Heart left ventricle (tissue), 16 donors: ENCODE measurements at regions of chr6 and their contacts with region 1.

Region 1: DNA sequence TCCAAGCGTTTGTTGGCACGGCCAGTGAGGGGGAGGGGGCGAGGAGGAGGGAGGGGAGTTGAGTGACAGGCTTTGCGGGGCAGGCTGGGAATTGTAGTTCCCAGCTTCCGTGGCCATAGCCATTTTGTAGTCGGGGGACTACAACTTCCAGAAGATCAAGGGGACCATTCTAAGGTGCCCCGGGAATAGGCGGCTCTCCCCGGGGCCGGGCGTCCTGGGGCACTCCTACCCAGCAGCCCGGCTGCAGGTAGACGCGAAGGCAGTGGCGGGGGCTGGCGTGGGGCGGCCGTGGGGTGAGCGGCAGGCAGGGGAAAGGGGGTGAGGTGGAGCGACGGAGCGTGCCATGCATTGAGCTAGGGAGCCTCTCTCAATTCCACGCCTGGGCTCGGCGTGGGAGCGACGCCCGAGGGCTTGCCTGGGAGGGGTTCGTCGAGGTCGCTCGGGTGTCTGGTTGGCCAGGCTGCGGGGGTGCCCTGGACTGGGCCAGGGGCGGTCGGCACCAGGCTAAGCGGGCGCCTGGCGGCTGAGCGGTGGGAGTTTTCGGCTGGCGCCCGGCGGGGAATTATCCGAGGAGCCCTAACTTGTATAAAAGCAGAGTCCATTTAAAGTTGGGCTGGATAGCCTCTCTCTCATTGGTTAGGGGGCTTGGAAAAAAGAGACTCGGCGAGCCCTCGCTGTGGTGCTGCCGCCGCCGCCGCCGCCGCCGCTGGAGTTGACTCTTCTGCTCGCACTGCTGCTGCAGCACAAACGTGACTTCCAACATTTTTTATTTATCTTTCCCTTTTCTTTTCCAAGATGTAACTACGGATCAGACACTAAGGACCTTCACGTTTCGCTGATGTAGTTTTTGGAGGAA is at the start of gene JARID2:
- DNase-seq: peak; percentile 99 to 100 (median 99)
- ATAC-seq: peak; percentile 81 to 91 (median 90)
- H3K4me3 ChIP-seq: peak within 1 kb of the TSS; percentile 54 to 92 (median 82)
- H3K27ac ChIP-seq: peak within 1 kb of the TSS; percentile 76 to 98 (median 95)
- H3K4me1 ChIP-seq: peaks cover 0 to 38% (median 12%) of the 10 kb centered on the region in 12 donors
- H3K27me3 ChIP-seq: no peaks in the 10 kb centered on the region
- CTCF ChIP-seq: no peak
- POLR2A ChIP-seq: peak; percentile 74 to 95
- total RNA-seq, gene JARID2: 6.0 to 12.2 (median 8.5) TPM

Region 2: GRCh38 chr6:14431385-14432330 is 813.9 kb before region 1 on chr6:
- intact Hi-C with region 1: loop called in 1 of 10 experiments (anchors 10 kb)
- DNase-seq: peak in 2 of 5 donors; percentile 49 to 60
- ATAC-seq: peak; percentile 92 to 96 (median 93)
- H3K4me3 ChIP-seq: peak overlapping the region; percentile 2 to 59 (median 40)
- H3K27ac ChIP-seq: peak overlapping the region in 11 of 12 donors; percentile 30 to 80 (median 50)
- H3K4me1 ChIP-seq: peaks cover 0 to 21% (median 0%) of the 10 kb centered on the region in 12 donors
- H3K27me3 ChIP-seq: no peaks in the 10 kb centered on the region
- CTCF ChIP-seq: no peak
- POLR2A ChIP-seq: no peak

Region 3: GRCh38 chr6:14799928-14800327 is 445.7 kb before region 1 on chr6:
- intact Hi-C with region 1: loop called in 1 of 10 experiments (anchors 10 kb)
- DNase-seq: peak in 4 of 5 donors; percentile 75 to 83 (median 78)
- ATAC-seq: peak; percentile 91 to 96 (median 92)
- H3K4me3 ChIP-seq: no peak overlapping the region
- H3K27ac ChIP-seq: peak overlapping the region in 6 of 12 donors; percentile 2 to 43 (median 20)
- H3K4me1 ChIP-seq: peaks cover 0 to 23% (median 14%) of the 10 kb centered on the region in 12 donors
- H3K27me3 ChIP-seq: no peaks in the 10 kb centered on the region
- CTCF ChIP-seq: no peak
- POLR2A ChIP-seq: no peak

Region 4: GRCh38 chr6:14889191-14889590 is 356.4 kb before region 1 on chr6:
- intact Hi-C with region 1: loop called in 4 of 10 experiments (anchors 5 to 10 kb)
- DNase-seq: no peak
- ATAC-seq: no peak
- H3K4me3 ChIP-seq: no peak overlapping the region
- H3K27ac ChIP-seq: peak overlapping the region in 8 of 12 donors; percentile 43 to 87 (median 68)
- H3K4me1 ChIP-seq: peaks cover 0 to 25% (median 9%) of the 10 kb centered on the region in 12 donors
- H3K27me3 ChIP-seq: no peaks in the 10 kb centered on the region
- CTCF ChIP-seq: no peak
- POLR2A ChIP-seq: no peak

Region 5: GRCh38 chr6:15160812-15161211 is 84.8 kb before region 1 on chr6:
- intact Hi-C with region 1: no loop called
- DNase-seq: no peak
- ATAC-seq: no peak
- H3K4me3 ChIP-seq: no peak overlapping the region
- H3K27ac ChIP-seq: no peak overlapping the region
- H3K4me1 ChIP-seq: no peaks in the 10 kb centered on the region
- H3K27me3 ChIP-seq: no peaks in the 10 kb centered on the region
- CTCF ChIP-seq: no peak
- POLR2A ChIP-seq: no peak

Region 6: GRCh38 chr6:15429141-15430110 is 183.8 kb after region 1 on chr6:
- intact Hi-C with region 1: loop called in 1 of 10 experiments (anchors 5 kb)
- DNase-seq: no peak
- ATAC-seq: no peak
- H3K4me3 ChIP-seq: no peak overlapping the region
- H3K27ac ChIP-seq: peak overlapping the region in 1 of 12 donors; percentile 13
- H3K4me1 ChIP-seq: peaks cover 11 to 84% (median 68%) of the 10 kb centered on the region in 12 donors
- H3K27me3 ChIP-seq: no peaks in the 10 kb centered on the region
- CTCF ChIP-seq: no peak
- POLR2A ChIP-seq: no peak

Region 7: DNA sequence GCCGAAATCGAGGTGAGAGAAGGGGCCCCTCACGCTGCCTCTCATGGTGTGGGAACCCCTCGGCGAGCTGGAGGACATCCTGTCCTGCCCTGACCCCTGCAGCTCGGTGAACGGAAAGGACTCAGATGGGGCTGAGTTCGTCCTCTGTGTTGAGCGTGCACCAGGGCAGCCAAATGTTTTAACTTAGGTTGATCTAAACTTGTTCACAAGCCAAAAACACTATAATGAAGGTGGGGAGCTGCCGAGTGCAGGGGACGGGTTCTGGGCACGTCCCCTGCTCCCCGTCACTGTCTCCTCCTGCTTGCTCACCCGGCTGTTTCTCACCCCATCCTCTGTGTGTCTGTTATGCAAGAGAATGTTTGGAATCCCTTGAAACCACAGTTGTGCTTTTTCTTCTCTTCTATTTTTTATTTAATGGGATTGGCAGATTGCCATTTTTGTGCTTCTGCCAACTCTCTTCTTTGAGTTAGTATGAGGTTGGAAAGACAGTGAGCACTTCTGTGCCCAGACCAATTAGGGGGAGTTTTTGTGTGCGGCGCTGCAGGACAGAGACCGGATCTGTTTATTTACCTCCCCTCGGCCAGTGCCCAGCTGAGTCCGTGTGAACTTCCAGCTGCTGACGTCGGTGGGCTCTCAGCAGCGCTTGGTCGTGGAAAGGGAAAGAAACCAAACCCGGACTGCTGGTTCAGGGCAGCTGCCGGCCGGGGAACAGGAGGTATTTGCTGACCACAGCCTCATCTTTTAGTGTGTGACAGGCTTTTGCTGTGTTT is 259.2 kb after region 1 on chr6:
- intact Hi-C with region 1: loop called in 6 of 10 experiments (anchors 5 to 10 kb)
- DNase-seq: peak; percentile 75 to 81 (median 78)
- ATAC-seq: peak; percentile 72 to 87 (median 78)
- H3K4me3 ChIP-seq: peak overlapping the region in 10 of 12 donors; percentile 10 to 50 (median 33)
- H3K27ac ChIP-seq: peak overlapping the region; percentile 67 to 89 (median 79)
- H3K4me1 ChIP-seq: peaks cover 0 to 56% (median 43%) of the 10 kb centered on the region in 12 donors
- H3K27me3 ChIP-seq: no peaks in the 10 kb centered on the region
- CTCF ChIP-seq: no peak
- POLR2A ChIP-seq: no peak